HEK293 (cell line): ENCODE measurements at regions of chr11 and their contacts with region 1.

Region 1: DNA sequence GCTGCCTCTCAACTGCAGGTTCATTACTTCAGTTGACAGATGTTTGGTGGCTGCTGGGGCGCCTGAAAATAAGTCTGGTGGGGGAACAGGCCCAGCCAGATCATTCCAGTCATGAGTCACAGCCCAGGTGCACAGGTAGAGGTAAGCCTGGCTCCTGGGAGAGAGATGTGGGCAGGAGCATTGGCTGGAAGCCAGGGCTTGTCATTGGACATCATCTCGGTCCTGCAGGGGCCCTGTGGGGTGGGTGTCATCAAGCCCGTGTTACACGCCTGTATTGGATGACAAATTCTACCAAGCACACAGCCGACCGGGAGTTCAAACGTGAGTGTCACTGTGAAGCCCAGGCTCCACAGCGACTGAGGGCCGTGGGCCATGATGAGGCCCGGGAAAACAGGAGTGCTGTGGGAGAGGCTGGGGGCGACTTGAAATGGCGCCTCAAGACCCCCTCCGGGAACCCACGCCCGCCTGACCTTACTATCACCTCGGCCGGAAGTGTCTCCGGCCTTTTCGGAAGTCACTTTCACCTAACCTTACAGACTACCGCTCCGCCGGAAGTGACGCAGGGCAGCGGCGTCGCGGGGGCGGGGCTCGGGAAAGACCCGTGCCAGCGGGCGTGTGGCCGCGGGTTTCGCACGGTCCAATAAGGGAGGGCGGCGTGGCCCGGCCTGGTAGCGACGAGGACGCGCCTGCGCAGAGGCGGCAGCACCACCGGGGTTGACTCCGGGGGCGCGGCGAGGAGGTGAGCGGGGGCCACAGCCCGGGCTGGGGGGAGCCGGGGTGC is at the start of gene FKBP2:
- H3K4me3 ChIP-seq: peak within 1 kb of the TSS; percentile 75
- H3K27ac ChIP-seq: peak within 1 kb of the TSS; percentile 83
- H3K4me1 ChIP-seq: no peaks in the 10 kb centered on the region
- CTCF ChIP-seq: no peak

Region 2: GRCh38 chr11:64196626-64197025 is 44.0 kb before region 1 on chr11:
- CTCF ChIA-PET with region 1: no interaction called
- POLR2A ChIA-PET with region 1: no interaction called
- H3K4me3 ChIP-seq: no peak overlapping the region
- H3K27ac ChIP-seq: no peak overlapping the region
- H3K4me1 ChIP-seq: no peaks in the 10 kb centered on the region
- CTCF ChIP-seq: no peak

Region 3: DNA sequence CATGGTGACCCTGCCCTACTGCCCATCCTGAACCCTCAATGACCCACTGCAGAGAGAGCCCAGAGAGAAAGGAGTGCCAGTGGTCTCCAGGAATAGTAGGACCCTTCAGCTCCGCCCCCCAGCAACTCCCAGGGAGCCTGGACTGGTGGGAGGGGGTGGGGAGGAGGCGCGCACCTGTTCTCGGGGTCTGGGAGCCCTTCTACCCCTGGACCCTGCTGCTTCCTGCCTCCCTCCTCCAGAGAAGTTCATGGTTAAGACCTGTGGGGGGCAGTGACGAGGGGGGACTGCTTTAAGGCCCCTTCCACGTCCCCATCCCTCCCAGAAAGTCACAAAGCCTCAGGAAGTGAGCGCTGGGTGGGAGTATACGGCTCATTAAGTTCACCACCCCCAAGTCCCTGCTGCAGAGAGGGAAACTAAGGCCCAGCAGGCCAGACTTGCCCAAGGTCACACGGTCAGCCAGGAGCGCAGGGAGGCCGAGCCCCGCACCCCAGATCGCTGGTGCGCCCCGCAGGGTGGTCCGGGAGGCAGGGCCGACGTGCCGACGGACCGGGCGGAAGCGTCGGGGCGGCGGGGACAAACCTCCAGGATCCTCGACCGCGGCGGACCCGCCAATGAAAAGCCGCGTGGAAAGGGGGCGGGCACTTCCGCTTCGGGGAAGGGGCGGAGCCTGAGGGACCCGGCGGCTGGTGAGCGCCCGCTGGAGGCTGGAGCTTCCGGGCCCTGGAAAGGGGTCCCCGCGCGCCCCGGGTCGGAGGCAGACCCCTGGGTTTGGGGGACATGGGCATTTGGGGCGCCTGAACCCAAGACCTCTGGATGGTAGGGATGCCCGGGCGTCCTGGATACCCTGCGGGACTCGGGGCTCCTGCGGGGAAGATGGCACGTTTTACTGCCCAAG is 14.7 kb before region 1 on chr11 and contains the starts of genes NUDT22 and TRPT1:
- CTCF ChIA-PET with region 1: no interaction called
- POLR2A ChIA-PET with region 1: interaction called, 12 read pairs
- H3K4me3 ChIP-seq: peak within 1 kb of the TSS; percentile 77
- H3K27ac ChIP-seq: peak within 1 kb of the TSS; percentile 52; the same call in 1 of the 2 replicates
- H3K4me1 ChIP-seq: peaks cover 3% of the 10 kb centered on the region; the same call in 1 of the 2 replicates
- CTCF ChIP-seq: no peak; the same call in 1 of the 2 replicates

Region 4: GRCh38 chr11:64269380-64270234 is 29.0 kb after region 1 on chr11:
- CTCF ChIA-PET with region 1: interaction called, 5 read pairs
- POLR2A ChIA-PET with region 1: interaction called, 96 read pairs
- H3K4me3 ChIP-seq: peak overlapping the region; percentile 70
- H3K27ac ChIP-seq: peak overlapping the region; percentile 83
- H3K4me1 ChIP-seq: 0 out of 2 replicates have a peak, but pooled peaks cover 2% of the 10 kb centered on the region
- CTCF ChIP-seq: 0 out of 2 replicates have a peak, but pooled peaks have one; percentile 25

Region 5: GRCh38 chr11:64362339-64362738 is 121.8 kb after region 1 on chr11:
- CTCF ChIA-PET with region 1: no interaction called
- POLR2A ChIA-PET with region 1: no interaction called
- H3K4me3 ChIP-seq: no peak overlapping the region
- H3K27ac ChIP-seq: no peak overlapping the region
- H3K4me1 ChIP-seq: no peaks in the 10 kb centered on the region; the same call in 1 of the 2 replicates
- CTCF ChIP-seq: no peak